ENCODE measurements at regions of chr7 and their contacts with region 1.

Region 1: GRCh38 chr7:148884299-148885022 is 370 bp upstream of the EZH2 start:
- DNase-seq: peak; percentile 93
- H3K4me3 Mint-ChIP-seq: peak overlapping the region; percentile 94
- H3K27ac Mint-ChIP-seq: peak overlapping the region; percentile 99
- H3K4me1 Mint-ChIP-seq: peaks cover 37% of the 10 kb centered on the region
- H3K27me3 Mint-ChIP-seq: no peaks in the 10 kb centered on the region

Region 2: DNA sequence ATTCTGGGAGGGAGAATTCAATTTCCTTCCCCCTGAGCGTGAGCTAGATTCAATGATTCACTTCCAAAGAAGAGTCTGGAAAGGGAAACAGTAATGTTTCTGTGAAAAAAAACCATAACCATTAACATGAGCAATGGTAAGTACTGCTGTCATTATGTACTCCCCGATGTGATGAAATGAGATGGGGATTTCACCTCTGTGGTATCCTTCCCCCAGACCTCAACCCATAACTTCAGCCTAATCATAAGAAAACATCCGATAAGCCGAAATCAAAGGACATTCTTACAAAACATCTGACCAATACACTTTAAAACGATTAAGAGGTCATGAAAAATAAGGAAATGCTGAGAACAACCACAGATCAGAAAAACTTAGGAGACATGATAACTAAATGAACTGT is 27.6 kb before region 1 on chr7:
- CTCF ChIA-PET with region 1: interaction called, 5 read pairs
- intact Hi-C with region 1: loop called (anchors 1 kb)
- DNase-seq: peak; percentile 14
- H3K4me3 Mint-ChIP-seq: no peak overlapping the region
- H3K27ac Mint-ChIP-seq: peak overlapping the region; percentile 32
- H3K4me1 Mint-ChIP-seq: peaks cover 38% of the 10 kb centered on the region
- H3K27me3 Mint-ChIP-seq: no peaks in the 10 kb centered on the region

Region 3: DNA sequence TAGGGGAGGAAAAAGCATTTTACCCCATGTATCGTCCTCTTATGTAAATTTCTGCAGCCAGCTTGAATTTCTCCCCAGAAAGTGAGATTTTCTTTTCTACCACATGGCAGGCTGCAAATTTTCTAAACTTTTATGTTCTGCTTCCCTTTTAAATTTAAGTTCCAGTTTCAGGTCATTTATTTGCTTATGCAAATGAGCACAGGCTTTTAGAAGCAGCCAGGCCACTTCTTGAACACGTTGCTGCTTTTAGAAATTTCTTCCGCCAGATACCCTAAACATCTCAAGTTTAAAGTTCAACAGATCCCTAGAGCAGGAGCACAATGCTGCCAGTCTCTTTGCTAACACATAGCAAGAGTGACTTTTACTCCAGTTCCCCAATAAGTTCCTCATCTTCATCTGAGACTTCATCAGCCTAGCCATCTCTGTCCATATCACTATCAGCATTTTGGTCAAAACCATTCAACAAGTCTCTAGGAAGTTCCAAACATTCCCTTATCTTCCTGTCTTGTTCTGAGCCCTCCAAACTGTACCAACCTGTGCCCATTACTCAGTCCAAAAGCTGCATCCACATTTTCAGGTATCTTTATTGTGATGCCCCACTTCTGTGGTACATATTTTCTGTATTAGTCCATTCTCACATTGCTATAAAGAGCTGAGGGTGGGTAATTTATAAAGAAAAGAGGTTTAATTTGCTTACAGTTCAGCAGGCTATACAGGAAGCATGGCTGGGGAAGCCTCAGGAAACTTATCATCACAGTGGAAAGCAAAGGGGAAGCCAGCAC is 16.7 kb before region 1 on chr7:
- CTCF ChIA-PET with region 1: no interaction called
- intact Hi-C with region 1: loop called (anchors 2 kb)
- DNase-seq: no peak
- H3K4me3 Mint-ChIP-seq: no peak overlapping the region
- H3K27ac Mint-ChIP-seq: peak overlapping the region; percentile 46
- H3K4me1 Mint-ChIP-seq: peaks cover 64% of the 10 kb centered on the region
- H3K27me3 Mint-ChIP-seq: no peaks in the 10 kb centered on the region

Region 4: DNA sequence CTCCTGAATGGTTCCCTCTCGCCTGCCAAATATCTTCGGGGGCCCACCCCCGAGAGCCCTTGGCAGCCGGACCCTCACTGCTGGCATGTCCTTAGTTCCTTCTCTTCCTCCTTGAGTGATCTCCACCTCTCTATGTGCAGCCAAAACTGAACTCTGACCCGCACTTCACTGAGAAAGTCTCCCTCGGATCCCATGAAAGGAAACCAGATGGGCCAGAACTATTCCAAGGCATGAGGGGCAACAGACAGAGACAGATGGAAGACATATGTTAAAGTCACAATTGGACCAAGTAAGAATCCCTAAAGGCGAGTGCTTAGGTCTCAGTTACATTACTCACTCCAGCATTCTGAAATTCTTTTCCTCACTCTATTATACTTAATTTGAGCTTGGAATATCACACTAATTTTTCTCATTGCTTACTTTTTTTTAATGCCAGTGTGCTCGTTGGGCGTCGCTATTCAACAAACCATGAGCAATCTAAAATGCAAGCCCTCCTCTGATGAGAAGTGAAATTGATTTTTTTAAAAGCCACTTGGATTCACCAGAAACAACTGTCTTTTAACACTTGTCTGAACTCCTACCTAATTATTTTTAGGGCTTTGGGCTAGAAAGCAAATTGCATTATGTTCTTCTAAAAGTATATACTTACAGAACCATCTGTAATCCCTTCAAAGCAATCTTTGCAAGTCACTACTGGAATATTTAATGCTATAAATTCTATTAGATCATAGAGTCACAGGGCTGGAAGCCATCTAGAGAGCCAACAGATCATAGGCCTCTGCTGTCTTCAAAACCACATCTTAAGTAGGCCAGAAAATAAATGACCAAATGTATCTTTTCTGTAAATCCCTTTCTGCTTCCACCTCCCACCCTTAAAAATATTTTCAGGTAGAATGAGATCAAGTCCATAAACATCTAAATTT is 42.9 kb after region 1 on chr7:
- CTCF ChIA-PET with region 1: no interaction called
- intact Hi-C with region 1: loop called (anchors 1 kb)
- DNase-seq: no peak
- H3K4me3 Mint-ChIP-seq: peak overlapping the region; percentile 34
- H3K27ac Mint-ChIP-seq: peak overlapping the region; percentile 92
- H3K4me1 Mint-ChIP-seq: peaks cover 67% of the 10 kb centered on the region
- H3K27me3 Mint-ChIP-seq: no peaks in the 10 kb centered on the region

Region 5: DNA sequence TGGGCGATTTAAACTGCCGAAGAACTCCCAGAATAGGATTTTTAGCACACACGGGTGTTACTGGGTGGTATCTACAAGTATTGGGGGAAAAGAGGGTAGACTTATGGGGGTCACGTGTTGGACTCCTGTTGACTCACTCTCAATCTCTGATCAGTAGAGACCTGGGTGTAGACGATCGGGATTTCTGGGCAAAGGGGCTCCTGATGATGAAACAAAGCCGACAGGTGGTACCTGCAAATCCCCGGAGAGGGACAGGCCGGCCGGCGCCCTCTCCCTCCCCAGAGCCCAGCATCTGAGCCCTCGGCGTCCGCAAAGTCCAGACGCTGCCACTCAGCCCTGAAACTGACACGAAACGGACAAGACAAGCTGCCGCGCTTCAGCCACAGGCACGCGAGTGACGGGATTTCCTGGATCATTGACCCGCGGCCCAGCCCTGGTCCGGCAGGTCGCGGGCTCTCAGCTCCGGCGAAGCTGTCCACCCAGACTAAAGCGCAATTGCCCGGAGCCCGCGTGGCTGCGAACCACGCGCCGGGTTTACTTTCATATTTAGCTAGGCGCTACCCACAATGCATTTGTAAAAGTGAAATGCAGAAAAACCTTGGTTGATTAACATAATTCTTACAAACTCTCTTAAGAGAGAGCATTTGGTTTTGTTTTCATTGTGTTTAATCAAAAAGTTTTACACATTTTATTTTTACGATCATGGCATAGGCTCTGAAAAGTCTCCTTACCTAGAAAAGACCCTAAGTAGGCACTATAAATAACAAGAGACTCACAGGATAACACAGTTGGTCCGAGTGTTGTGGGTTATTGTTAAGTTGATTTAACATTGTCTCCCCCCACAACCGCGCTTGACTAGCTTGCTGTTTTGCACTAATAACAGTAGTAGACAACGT is 56.5 kb after region 1 on chr7:
- CTCF ChIA-PET with region 1: interaction called, 16 read pairs
- intact Hi-C with region 1: loop called (anchors 1 kb)
- DNase-seq: peak; percentile 68
- H3K4me3 Mint-ChIP-seq: peak overlapping the region; percentile 94
- H3K27ac Mint-ChIP-seq: peak overlapping the region; percentile 98
- H3K4me1 Mint-ChIP-seq: peaks cover 15% of the 10 kb centered on the region
- H3K27me3 Mint-ChIP-seq: no peaks in the 10 kb centered on the region

Region 6: DNA sequence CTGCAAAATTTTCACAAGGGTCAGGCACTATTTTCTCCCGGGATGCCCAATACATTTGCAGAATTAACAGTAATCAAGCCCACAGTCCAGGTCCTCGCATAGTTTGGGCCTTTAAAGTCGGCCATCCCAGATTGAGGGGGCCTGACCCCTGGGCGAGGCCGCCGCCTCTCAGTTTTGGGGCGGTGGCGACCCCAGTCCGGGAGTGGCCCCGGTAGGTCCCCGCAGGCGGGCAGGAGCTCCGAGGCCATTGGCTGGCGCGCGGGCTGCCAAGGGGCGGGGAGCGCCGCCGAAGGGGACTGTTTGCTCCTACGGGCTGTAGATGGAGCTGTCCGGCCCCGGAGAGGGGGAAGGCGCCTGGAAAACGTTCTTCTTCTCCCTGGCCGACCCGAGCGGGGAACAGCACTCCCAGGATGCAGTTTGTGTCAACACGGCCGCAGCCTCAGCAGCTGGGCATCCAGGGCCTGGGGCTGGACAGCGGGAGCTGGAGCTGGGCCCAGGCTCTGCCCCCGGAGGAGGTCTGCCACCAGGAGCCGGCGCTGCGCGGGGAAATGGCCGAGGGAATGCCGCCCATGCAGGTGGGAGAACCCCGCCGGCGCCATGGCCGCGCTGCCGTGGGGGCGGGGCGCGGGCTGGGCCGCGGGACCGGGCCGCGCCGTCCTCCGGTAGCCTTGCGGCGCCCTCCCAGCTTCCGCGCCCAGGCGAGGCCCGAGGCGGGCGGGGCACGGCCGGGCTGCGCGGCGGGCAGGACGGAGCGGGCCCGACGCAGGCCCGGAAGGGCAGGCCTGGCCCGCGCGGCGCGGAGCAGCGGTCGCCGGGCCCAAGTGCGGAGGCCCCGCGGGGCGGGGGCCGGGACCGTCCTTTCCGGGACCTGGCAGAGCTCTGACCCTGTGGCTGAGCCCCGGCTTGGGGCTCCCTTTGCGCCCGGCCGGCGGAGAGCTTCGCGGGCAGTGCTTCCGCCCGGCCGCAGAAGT is 311.0 kb after region 1 on chr7 and contains the start of gene ZNF282:
- CTCF ChIA-PET with region 1: no interaction called
- intact Hi-C with region 1: no loop called
- DNase-seq: peak; percentile 85
- H3K4me3 Mint-ChIP-seq: peak within 1 kb of the TSS; percentile 85
- H3K27ac Mint-ChIP-seq: peak within 1 kb of the TSS; percentile 78
- H3K4me1 Mint-ChIP-seq: peaks cover 30% of the 10 kb centered on the region
- H3K27me3 Mint-ChIP-seq: no peaks in the 10 kb centered on the region
- total RNA-seq, gene ZNF282: 21.6 to 22.0 TPM

Measured in activated naive CD4-positive, alpha-beta T cell treated with anti-CD3 and anti-CD28 coated beads for 36 hours (primary cell).